Activated CD4-positive, alpha-beta T cell treated with anti-CD3 and anti-CD28 coated beads for 36 hours (primary cell): ENCODE measurements at regions of chr14 and their contacts with region 1.

Region 1: GRCh38 chr14:98234208-98234607 is 1037.8 kb downstream of the BCL11B start:
- DNase-seq: peak; percentile 69
- ATAC-seq: peak; percentile 95
- H3K4me3 Mint-ChIP-seq: no peak overlapping the region
- H3K27ac Mint-ChIP-seq: peak overlapping the region; percentile 82
- H3K4me1 Mint-ChIP-seq: peaks cover 76% of the 10 kb centered on the region
- H3K27me3 Mint-ChIP-seq: no peaks in the 10 kb centered on the region

Region 2: GRCh38 chr14:98173305-98173704 is 60.9 kb before region 1 on chr14:
- CTCF ChIA-PET with region 1: interaction called, 9 read pairs
- POLR2A ChIA-PET with region 1: interaction called, 9 read pairs
- intact Hi-C with region 1: loop called in 1 of 2 experiments (anchors 1 kb)
- DNase-seq: peak; percentile 70
- ATAC-seq: no peak
- H3K4me3 Mint-ChIP-seq: peak overlapping the region; percentile 50
- H3K27ac Mint-ChIP-seq: peak overlapping the region; percentile 99
- H3K4me1 Mint-ChIP-seq: peaks cover 99% of the 10 kb centered on the region
- H3K27me3 Mint-ChIP-seq: no peaks in the 10 kb centered on the region

Region 3: GRCh38 chr14:98182393-98183055 is 51.7 kb before region 1 on chr14:
- CTCF ChIA-PET with region 1: interaction called, 3 read pairs
- POLR2A ChIA-PET with region 1: interaction called, 3 read pairs
- intact Hi-C with region 1: loop called (anchors 1 to 2 kb)
- DNase-seq: peak; percentile 86
- ATAC-seq: peak; percentile 74
- H3K4me3 Mint-ChIP-seq: peak overlapping the region; percentile 35
- H3K27ac Mint-ChIP-seq: peak overlapping the region; percentile 100
- H3K4me1 Mint-ChIP-seq: peaks cover 96% of the 10 kb centered on the region
- H3K27me3 Mint-ChIP-seq: no peaks in the 10 kb centered on the region

Region 4: GRCh38 chr14:98218218-98218617 is 16.0 kb before region 1 on chr14:
- CTCF ChIA-PET with region 1: interaction called, 4 read pairs
- POLR2A ChIA-PET with region 1: no interaction called
- intact Hi-C with region 1: loop called in 1 of 2 experiments (anchors 1 kb)
- DNase-seq: no peak
- ATAC-seq: no peak
- H3K4me3 Mint-ChIP-seq: no peak overlapping the region
- H3K27ac Mint-ChIP-seq: no peak overlapping the region
- H3K4me1 Mint-ChIP-seq: peaks cover 37% of the 10 kb centered on the region
- H3K27me3 Mint-ChIP-seq: no peaks in the 10 kb centered on the region

Region 5: DNA sequence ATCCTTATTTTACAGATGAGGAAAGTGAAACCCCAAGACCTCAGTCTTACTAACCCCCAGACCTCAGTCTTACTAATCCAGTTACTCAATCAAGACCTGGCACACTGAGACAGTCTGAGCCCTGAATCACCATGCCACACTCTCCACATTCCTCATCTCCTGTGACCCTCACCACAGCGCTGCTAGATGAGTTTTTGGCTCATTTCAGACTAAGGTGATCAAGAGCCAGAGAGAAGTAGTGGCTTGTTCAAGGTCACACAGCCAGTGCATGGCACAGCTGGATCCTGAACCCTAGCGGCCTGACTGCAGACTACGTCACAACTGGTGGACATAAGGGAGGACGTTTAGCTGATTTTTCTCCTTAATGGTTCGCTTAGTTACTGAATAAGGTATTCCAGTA is 458.6 kb after region 1 on chr14:
- CTCF ChIA-PET with region 1: no interaction called
- POLR2A ChIA-PET with region 1: no interaction called
- intact Hi-C with region 1: loop called in 1 of 2 experiments (anchors 10 kb)
- DNase-seq: peak; percentile 62
- ATAC-seq: peak; percentile 95
- H3K4me3 Mint-ChIP-seq: no peak overlapping the region
- H3K27ac Mint-ChIP-seq: no peak overlapping the region
- H3K4me1 Mint-ChIP-seq: peaks cover 12% of the 10 kb centered on the region
- H3K27me3 Mint-ChIP-seq: no peaks in the 10 kb centered on the region

Region 6: DNA sequence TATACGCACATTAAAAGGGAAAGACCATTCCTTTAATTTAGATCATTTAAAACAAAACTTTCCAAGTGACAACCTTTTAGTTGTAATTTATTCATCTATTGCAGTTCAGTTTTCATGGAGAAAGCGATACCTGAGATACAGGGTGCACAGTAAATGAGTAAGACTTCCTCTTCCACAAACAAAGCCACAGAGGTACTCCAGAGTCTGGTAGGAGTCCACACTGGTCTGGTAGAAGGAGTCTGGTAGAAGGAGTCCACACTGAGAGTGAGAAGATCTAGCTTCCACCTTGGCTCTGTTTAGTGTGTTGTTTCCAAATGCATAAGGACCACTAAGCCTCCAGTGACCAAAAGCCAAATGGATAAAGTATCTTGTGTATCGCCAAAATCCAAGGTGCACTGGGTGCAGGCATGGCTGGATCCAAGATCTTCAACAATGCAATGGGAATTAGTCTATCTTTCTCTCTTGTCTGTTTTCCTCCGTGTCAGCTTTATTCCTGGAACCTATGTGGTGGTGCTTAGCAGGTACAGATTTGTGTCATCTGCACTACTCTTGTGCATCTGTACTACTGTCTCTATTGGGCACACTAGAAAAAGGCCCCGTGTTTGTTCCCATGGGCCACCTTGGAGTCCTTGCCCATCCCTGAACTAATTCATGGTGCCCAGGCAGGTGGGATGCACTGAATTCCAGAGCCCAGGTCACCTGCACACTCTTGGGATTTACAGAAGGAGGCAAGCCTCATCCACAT is 706.7 kb after region 1 on chr14:
- CTCF ChIA-PET with region 1: no interaction called
- POLR2A ChIA-PET with region 1: no interaction called
- intact Hi-C with region 1: loop called in 1 of 2 experiments (anchors 5 kb)
- DNase-seq: no peak
- ATAC-seq: peak; percentile 72
- H3K4me3 Mint-ChIP-seq: no peak overlapping the region
- H3K27ac Mint-ChIP-seq: no peak overlapping the region
- H3K4me1 Mint-ChIP-seq: peaks cover 54% of the 10 kb centered on the region
- H3K27me3 Mint-ChIP-seq: no peaks in the 10 kb centered on the region